PC-9 (cell line): ENCODE measurements at regions of chr1 and their contacts with region 1.

Region 1: DNA sequence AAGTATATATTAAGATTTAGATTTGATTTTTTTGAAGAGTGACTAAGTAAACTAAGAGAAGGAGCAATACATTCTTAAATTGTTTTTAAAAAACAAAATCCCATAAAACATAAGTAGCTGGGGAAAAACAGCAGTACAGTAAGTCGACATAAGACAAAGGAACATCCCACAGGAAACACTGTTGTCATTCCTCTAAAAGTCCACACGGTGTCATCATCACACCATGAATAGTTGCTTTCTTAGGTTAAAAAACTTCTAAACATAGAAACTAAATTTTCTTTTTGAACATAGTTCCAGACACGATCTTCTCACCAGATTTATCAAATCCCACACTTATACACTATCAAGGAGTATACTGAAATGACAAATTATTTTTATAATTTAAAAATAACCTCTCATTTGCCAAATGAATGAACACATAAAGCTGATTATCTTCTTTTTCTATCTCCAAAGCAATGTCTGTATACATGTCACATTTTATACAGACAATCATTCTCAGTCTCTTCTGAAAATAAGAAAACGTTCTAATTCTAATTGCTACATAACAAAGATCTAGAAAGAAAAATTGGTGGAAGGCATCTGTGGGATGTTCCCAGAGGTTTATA is 15.8 kb downstream of the ODF2L start:
- DNase-seq: peak in 1 of 2 experiments; percentile 62
- H3K4me3 ChIP-seq: no peak overlapping the region
- H3K27ac ChIP-seq: no peak overlapping the region
- H3K4me1 ChIP-seq: no peaks in the 10 kb centered on the region
- H3K27me3 ChIP-seq: no peaks in the 10 kb centered on the region
- CTCF ChIP-seq: peak; percentile 91

Region 2: DNA sequence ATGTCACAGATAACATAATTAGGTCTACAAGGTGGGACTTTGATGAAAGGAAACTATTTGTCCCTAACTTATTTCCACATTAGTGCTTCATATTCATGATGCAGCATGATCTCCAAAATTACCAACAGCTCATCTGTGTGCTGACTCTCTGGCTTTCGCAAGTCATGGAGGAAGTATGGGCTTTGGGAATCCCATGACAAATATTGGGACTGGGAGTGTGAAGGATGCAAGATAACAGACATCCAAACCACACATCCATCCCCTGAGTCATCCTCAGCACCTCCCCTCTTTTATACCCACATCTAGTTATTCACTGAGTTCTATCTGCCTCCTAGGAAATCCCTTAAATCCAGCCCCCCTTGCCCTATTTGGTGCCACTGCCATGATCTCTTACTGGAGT is 121.0 kb before region 1 on chr1:
- CTCF ChIA-PET with region 1: no interaction called
- POLR2A ChIA-PET with region 1: no interaction called
- intact Hi-C with region 1: no loop called
- DNase-seq: no peak
- H3K4me3 ChIP-seq: no peak overlapping the region
- H3K27ac ChIP-seq: no peak overlapping the region
- H3K4me1 ChIP-seq: no peaks in the 10 kb centered on the region
- H3K27me3 ChIP-seq: no peaks in the 10 kb centered on the region
- CTCF ChIP-seq: no peak

Region 3: GRCh38 chr1:86419277-86419903 is 39.0 kb after region 1 on chr1:
- CTCF ChIA-PET with region 1: no interaction called
- POLR2A ChIA-PET with region 1: no interaction called
- intact Hi-C with region 1: loop called (anchors 2 kb)
- DNase-seq: peak; percentile 55 to 62
- H3K4me3 ChIP-seq: no peak overlapping the region
- H3K27ac ChIP-seq: no peak overlapping the region
- H3K4me1 ChIP-seq: peaks cover 36% of the 10 kb centered on the region
- H3K27me3 ChIP-seq: no peaks in the 10 kb centered on the region
- CTCF ChIP-seq: peak; percentile 85

Region 4: GRCh38 chr1:86466986-86467385 is 86.6 kb after region 1 on chr1:
- CTCF ChIA-PET with region 1: no interaction called
- POLR2A ChIA-PET with region 1: no interaction called
- intact Hi-C with region 1: no loop called
- DNase-seq: no peak
- H3K4me3 ChIP-seq: no peak overlapping the region
- H3K27ac ChIP-seq: no peak overlapping the region
- H3K4me1 ChIP-seq: no peaks in the 10 kb centered on the region
- H3K27me3 ChIP-seq: no peaks in the 10 kb centered on the region
- CTCF ChIP-seq: no peak

Region 5: GRCh38 chr1:86704458-86704971 is 324.2 kb after region 1 on chr1 and contains the start of gene SH3GLB1:
- CTCF ChIA-PET with region 1: interaction called, 4 read pairs
- POLR2A ChIA-PET with region 1: no interaction called
- intact Hi-C with region 1: loop called (anchors 10 kb)
- DNase-seq: peak; percentile 84 to 89
- H3K4me3 ChIP-seq: peak within 1 kb of the TSS; percentile 76
- H3K27ac ChIP-seq: peak within 1 kb of the TSS; percentile 77
- H3K4me1 ChIP-seq: peaks cover 30% of the 10 kb centered on the region
- H3K27me3 ChIP-seq: no peaks in the 10 kb centered on the region
- CTCF ChIP-seq: peak; percentile 97
- total RNA-seq, gene SH3GLB1: 38.3 and 47.6 TPM in 2 replicates

Region 6: GRCh38 chr1:86741947-86742572 is 361.7 kb after region 1 on chr1:
- CTCF ChIA-PET with region 1: no interaction called
- POLR2A ChIA-PET with region 1: no interaction called
- intact Hi-C with region 1: loop called (anchors 5 kb)
- DNase-seq: peak in 1 of 2 experiments; percentile 11
- H3K4me3 ChIP-seq: no peak overlapping the region
- H3K27ac ChIP-seq: no peak overlapping the region
- H3K4me1 ChIP-seq: no peaks in the 10 kb centered on the region
- H3K27me3 ChIP-seq: no peaks in the 10 kb centered on the region
- CTCF ChIP-seq: peak; percentile 95